IMR-90 (cell line): ENCODE measurements at regions of chr6 and their contacts with region 1.

Region 1: DNA sequence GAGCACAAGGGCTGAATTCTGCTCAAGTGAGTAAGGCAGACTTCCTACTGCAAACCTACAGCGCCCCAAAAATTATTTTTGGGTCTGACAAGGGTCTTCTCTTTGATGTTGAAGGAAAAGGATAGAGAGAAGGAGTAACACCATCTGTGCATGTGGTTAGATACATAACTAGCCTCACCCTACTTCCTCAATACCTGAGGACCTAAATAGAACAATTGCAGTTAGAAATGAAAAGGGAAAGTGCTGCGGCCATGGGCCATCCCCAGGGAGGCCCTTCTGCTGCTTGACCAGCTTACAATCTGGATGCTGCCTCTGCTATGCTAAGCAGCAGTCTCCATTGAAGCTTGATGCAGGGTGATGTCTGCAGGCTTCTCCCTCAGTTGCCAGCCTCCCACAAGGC is 63.2 kb upstream of the ARMH2 start:
- DNase-seq: no peak
- ATAC-seq: no peak
- H3K4me3 ChIP-seq: no peak overlapping the region
- H3K27ac ChIP-seq: no peak overlapping the region
- H3K4me1 ChIP-seq: no peaks in the 10 kb centered on the region; the same call in 1 of the 2 replicates
- H3K27me3 ChIP-seq: no peaks in the 10 kb centered on the region
- CTCF ChIP-seq: no peak
- POLR2A ChIP-seq: no peak
- RAD21 ChIP-seq: no peak

Region 2: GRCh38 chr6:25006565-25007001 is 144.6 kb after region 1 on chr6:
- CTCF ChIA-PET with region 1: no interaction called
- POLR2A ChIA-PET with region 1: no interaction called
- dilution Hi-C with region 1: no loop called
- in situ Hi-C with region 1: loop called (anchors 5 kb)
- intact Hi-C with region 1: no loop called
- DNase-seq: no peak
- ATAC-seq: no peak; the same call in 1 of the 2 replicates
- H3K4me3 ChIP-seq: no peak overlapping the region
- H3K27ac ChIP-seq: peak overlapping the region; percentile 46
- H3K4me1 ChIP-seq: peaks cover 15% of the 10 kb centered on the region
- H3K27me3 ChIP-seq: no peaks in the 10 kb centered on the region
- CTCF ChIP-seq: no peak
- POLR2A ChIP-seq: no peak
- RAD21 ChIP-seq: no peak